ENCODE measurements at regions of chr12 and their contacts with region 1.

Region 1: GRCh38 chr12:4997939-4998338 is 45.7 kb upstream of the KCNA5 start:
- DNase-seq: no peak
- CTCF ChIP-seq: no peak

Region 2: GRCh38 chr12:4859478-4860210 is 138.3 kb before region 1 on chr12:
- in situ Hi-C with region 1: loop called (anchors 10 kb)
- DNase-seq: peak; percentile 37
- CTCF ChIP-seq: no peak